Breast epithelium (tissue), 4 donors: ENCODE measurements at regions of chr1 and their contacts with region 1.

Region 1: DNA sequence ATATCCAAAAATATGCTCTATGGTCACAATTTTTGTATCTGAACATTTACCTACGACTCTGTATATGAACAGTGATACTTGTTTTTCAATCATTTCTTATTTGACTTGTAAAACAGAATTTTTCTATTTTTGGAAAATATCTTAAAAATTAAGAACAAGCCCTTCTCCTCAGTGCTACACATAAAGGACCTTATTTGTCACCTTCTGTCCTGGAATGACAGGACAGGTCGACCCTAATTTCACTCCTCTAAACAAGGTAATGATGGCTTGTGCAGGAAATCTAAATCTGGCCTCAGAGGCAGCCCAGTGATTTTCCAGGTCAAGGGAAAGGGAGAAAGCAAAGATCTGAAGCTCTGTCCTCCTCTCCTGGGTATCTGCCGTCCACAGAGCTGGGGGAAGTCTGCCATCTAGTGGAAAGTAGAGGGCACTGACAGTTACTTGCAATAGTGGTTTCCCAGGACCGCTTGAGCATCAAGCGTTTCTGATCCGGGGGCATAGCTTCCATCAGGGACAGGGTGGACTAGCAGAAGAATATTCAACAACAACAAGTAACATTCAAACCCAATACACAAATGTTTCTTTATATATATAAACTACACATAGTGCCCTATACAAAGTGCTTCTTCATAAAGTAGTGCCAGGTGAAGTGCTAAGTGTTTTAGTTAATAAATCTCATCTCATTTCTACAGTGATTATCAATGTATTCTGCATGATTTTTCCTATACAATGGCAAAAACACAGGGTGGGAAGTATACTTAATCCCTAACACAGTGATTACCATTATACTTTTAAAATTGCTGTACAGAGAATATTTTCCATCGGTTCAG is 74.6 kb downstream of the SLC25A24 start:
- DNase-seq: peak; percentile 57 to 63
- H3K4me3 ChIP-seq: no peak overlapping the region
- H3K27ac ChIP-seq: no peak overlapping the region
- H3K4me1 ChIP-seq: no peaks in the 10 kb centered on the region
- H3K27me3 ChIP-seq: no peaks in the 10 kb centered on the region
- CTCF ChIP-seq: peak; percentile 76 to 96 (median 94)
- POLR2A ChIP-seq: no peak

Region 2: GRCh38 chr1:107776900-107777663 is 348.4 kb before region 1 on chr1:
- intact Hi-C with region 1: loop called (anchors 1 kb)
- DNase-seq: no peak
- H3K4me3 ChIP-seq: no peak overlapping the region
- H3K27ac ChIP-seq: no peak overlapping the region
- H3K4me1 ChIP-seq: no peaks in the 10 kb centered on the region
- H3K27me3 ChIP-seq: no peaks in the 10 kb centered on the region
- CTCF ChIP-seq: no peak
- POLR2A ChIP-seq: no peak

Region 3: GRCh38 chr1:107785496-107786206 is 339.9 kb before region 1 on chr1:
- intact Hi-C with region 1: loop called (anchors 1 kb)
- DNase-seq: no peak
- H3K4me3 ChIP-seq: no peak overlapping the region
- H3K27ac ChIP-seq: peak overlapping the region in 1 of 2 donors; percentile 2
- H3K4me1 ChIP-seq: peaks cover 0 to 4% of the 10 kb centered on the region in 2 donors
- H3K27me3 ChIP-seq: no peaks in the 10 kb centered on the region
- CTCF ChIP-seq: no peak
- POLR2A ChIP-seq: no peak

Region 4: GRCh38 chr1:108158893-108159453 is 33.4 kb after region 1 on chr1:
- intact Hi-C with region 1: no loop called
- DNase-seq: no peak
- H3K4me3 ChIP-seq: no peak overlapping the region
- H3K27ac ChIP-seq: no peak overlapping the region
- H3K4me1 ChIP-seq: no peaks in the 10 kb centered on the region
- H3K27me3 ChIP-seq: no peaks in the 10 kb centered on the region
- CTCF ChIP-seq: no peak
- POLR2A ChIP-seq: no peak